Transverse colon (tissue), 4 donors: ENCODE measurements at regions of chr12 and their contacts with region 1.

Region 1: GRCh38 chr12:115916910-115917668 is 360.4 kb downstream of the MED13L start:
- DNase-seq: peak; percentile 82
- H3K4me3 ChIP-seq: peak overlapping the region in 3 of 4 donors; percentile 13 to 36 (median 20)
- H3K27ac ChIP-seq: no peak overlapping the region
- H3K4me1 ChIP-seq: peaks cover 3 to 5% (median 4%) of the 10 kb centered on the region in 4 donors
- H3K27me3 ChIP-seq: peaks cover 37% of the 10 kb centered on the region
- CTCF ChIP-seq: peak; percentile 94 to 98 (median 97)
- EP300 ChIP-seq: no peak
- POLR2A ChIP-seq: no peak

Region 2: DNA sequence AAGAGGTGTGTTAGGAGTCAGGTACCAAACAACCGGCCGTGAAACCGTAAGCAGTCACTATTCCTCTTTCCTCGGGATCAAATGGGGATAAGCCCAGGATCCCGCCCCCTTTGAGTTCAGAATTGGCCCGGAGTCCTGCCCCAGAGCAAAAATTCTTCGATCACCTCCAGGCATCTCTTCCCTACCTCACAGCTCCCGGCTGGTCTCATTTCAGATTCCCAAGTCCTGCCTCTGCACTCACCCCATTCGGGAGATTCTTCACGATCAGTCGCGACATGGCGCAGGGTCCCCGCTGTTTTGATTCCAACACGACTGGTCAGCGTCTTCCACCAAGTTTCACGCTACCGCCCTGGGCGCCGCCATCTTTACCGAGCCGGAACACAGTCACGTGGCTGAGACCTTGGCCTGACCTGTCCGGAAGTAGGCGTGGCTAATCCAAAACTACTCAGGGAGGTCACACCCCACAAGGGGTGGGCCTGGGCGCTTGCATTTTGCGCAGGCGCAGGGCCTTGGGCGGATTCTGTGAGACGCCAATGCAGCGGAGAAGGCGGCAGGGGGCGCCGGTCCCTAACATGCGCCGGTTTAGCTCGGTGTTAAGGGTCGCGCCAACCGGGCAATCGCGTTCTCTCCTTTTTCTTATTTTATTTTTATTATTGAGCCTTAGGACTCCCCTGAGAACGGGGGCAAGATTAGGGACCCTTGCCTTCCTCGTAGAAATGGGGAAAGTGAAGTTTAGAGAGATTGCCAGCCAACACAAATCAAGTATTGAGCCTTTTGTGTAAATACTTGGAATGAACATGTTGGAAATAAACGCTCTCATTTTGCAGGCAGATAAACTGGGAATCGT is 1950.9 kb before region 1 on chr12 and contains the start of gene RBM19:
- in situ Hi-C with region 1: loop called in 1 of 4 experiments (anchors 25 kb)
- intact Hi-C with region 1: no loop called
- DNase-seq: peak; percentile 98
- H3K4me3 ChIP-seq: peak within 1 kb of the TSS; percentile 45 to 83 (median 60)
- H3K27ac ChIP-seq: peak within 1 kb of the TSS; percentile 63 to 72 (median 64)
- H3K4me1 ChIP-seq: peaks cover 5 to 19% (median 11%) of the 10 kb centered on the region in 4 donors
- H3K27me3 ChIP-seq: no peaks in the 10 kb centered on the region
- CTCF ChIP-seq: peak; percentile 86 to 93 (median 90)
- EP300 ChIP-seq: no peak
- POLR2A ChIP-seq: peak; percentile 56
- total RNA-seq, gene RBM19: 24.3 to 96.1 (median 28.7) TPM

Region 3: DNA sequence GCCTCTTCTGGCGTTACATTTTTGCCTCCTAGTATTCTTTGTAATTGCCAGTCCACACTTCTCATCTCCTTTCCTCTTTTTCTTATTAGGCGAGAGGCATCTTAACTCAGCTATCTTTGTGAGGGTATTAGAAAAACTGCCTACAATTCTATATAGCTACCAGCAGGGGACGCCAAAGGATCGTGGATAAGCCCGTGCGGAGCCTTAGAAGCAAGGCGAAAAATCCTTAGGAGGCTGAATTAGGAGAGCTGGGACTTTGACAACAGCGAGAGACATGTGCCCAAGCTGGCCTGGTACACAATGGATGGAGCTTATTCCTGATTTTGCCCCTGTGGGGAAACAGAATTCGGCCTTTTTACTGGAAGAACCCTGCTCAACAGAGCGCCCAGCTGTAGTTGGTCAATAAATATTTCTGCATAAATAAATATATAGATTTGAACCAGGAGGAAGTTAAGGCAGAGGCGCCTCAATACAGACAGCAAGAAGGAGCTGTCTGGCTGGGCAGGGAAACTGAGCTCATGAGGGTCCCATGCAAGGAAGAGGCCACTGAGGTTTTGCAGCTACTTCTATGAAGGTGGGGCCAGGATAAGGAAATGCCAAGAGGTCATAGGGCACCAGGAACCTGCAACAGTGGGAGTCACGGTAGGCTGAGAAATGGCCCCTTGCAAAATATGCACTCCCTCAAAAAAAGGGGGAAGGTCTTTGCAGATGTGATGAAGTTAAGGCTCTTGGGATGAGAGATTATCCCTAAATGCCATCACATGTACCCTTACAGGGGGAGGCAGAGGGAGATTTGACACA is 1936.4 kb before region 1 on chr12:
- in situ Hi-C with region 1: loop called in 2 of 4 experiments (anchors 25 kb)
- intact Hi-C with region 1: no loop called
- DNase-seq: peak; percentile 24
- H3K4me3 ChIP-seq: no peak overlapping the region
- H3K27ac ChIP-seq: no peak overlapping the region
- H3K4me1 ChIP-seq: no peaks in the 10 kb centered on the region
- H3K27me3 ChIP-seq: peaks cover 24% of the 10 kb centered on the region
- CTCF ChIP-seq: peak; percentile 91 to 96 (median 93)
- EP300 ChIP-seq: no peak
- POLR2A ChIP-seq: no peak

Region 4: DNA sequence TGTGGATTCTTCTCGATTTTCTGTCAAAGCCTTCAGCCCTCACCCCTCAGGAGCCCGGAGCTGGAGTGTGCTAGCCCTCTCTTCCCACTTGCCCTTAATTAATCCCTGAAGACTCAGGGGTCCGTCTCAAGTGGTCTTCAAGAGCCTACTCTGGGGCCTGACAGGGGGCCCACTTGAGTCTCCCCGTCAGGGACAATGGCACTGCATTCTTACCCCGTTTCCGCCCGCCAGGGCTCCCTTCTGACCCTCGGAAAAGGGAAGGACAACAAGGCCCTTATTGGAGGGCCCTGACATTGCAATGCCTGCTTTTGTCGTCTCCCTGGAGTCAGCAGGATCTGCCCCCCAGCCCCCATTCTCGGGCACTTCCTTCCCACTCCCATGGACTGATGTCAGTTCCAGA is 1267.5 kb before region 1 on chr12:
- in situ Hi-C with region 1: loop called in 2 of 4 experiments (anchors 10 kb)
- intact Hi-C with region 1: no loop called
- DNase-seq: no peak
- H3K4me3 ChIP-seq: no peak overlapping the region
- H3K27ac ChIP-seq: no peak overlapping the region
- H3K4me1 ChIP-seq: no peaks in the 10 kb centered on the region
- H3K27me3 ChIP-seq: peaks cover 4% of the 10 kb centered on the region
- CTCF ChIP-seq: no peak
- EP300 ChIP-seq: no peak
- POLR2A ChIP-seq: no peak

Region 5: DNA sequence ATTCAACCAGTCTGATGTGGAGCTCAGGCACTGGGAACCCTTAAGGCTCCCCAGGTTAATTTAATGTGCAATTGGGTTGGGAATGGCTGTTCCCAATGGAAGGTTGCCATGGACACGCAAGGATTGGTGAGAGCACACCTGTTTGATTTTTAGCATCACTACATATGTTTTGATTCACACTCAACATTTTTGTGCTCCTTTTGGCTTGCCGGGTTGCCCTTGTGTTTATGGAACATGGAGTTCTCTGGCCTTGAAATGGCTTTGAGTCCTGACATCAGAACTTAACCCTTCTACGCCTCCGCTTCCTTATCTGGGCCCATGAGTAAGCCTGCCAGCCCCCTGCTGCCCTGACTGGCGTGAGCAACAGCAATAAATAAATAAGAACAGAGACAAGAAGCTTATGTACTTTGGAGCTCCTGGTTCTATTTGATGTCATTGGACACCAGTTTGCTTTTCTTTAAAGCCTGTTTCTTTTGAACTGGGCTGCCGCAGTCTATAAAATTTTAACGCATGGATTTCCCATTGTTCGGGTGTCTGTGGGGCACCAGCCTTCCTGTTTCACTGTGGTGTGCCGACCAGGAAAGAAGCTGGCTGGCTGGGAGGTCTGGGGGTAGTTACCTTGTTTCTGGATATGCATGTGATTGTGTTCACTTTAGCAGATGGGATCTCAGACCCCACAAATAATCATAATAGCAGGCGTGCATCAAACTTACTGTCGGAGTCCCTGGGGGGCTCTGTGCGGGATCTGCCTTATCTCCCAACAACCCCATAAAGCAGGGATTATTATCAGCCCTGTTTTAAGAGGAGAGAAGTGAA is 1260.9 kb before region 1 on chr12:
- in situ Hi-C with region 1: loop called in 3 of 4 experiments (anchors 5 to 10 kb)
- intact Hi-C with region 1: no loop called
- DNase-seq: no peak
- H3K4me3 ChIP-seq: no peak overlapping the region
- H3K27ac ChIP-seq: no peak overlapping the region
- H3K4me1 ChIP-seq: no peaks in the 10 kb centered on the region
- H3K27me3 ChIP-seq: peaks cover 20% of the 10 kb centered on the region
- CTCF ChIP-seq: no peak
- EP300 ChIP-seq: no peak
- POLR2A ChIP-seq: no peak

Region 6: DNA sequence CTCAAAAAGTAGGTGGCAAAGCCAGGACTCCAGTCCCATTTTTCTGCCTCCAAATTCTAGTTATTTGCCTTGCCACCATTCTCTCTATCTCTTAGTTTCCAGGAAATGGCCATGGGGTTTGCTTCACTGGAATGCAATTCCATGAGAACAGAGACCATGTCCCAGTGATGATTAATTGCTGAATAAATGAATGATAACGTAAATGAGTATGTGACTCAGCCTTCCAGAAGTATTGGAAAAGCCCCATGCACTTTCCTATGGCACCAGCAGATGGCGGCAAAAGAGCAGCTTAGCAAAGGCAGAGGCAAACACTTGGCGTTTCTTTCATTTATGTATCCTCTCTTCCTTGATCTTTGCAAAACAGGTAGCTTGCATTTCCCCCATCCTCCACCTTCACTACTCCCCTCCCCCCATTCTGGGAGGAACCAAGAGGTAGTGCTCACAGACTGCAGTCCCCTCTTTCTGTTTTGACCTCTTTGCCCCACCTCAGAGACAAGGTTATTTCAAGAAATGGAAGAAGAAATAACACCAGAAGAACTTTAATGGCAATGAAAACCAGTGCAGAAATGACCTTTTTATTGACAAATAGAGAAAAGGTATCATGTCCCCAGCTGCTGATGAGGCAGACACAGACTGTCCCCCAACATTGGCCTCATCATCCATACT is 1254.4 kb before region 1 on chr12:
- in situ Hi-C with region 1: loop called in 3 of 4 experiments (anchors 5 to 10 kb)
- intact Hi-C with region 1: loop called (anchors 5 kb)
- DNase-seq: peak; percentile 84
- H3K4me3 ChIP-seq: no peak overlapping the region
- H3K27ac ChIP-seq: no peak overlapping the region
- H3K4me1 ChIP-seq: peaks cover under 1 to 20% (median 4%) of the 10 kb centered on the region in 4 donors
- H3K27me3 ChIP-seq: peaks cover 61% of the 10 kb centered on the region
- CTCF ChIP-seq: peak; percentile 90 to 96 (median 94)
- EP300 ChIP-seq: no peak
- POLR2A ChIP-seq: no peak

Region 7: GRCh38 chr12:114668151-114668885 is 1248.8 kb before region 1 on chr12:
- in situ Hi-C with region 1: loop called in 2 of 4 experiments (anchors 5 to 10 kb)
- intact Hi-C with region 1: loop called (anchors 5 kb)
- DNase-seq: peak; percentile 90
- H3K4me3 ChIP-seq: peak overlapping the region; percentile 24 to 53 (median 34)
- H3K27ac ChIP-seq: peak overlapping the region; percentile 10 to 65 (median 62)
- H3K4me1 ChIP-seq: peaks cover 4 to 31% (median 10%) of the 10 kb centered on the region in 4 donors
- H3K27me3 ChIP-seq: peaks cover 88% of the 10 kb centered on the region
- CTCF ChIP-seq: peak; percentile 31 to 85 (median 57)
- EP300 ChIP-seq: no peak
- POLR2A ChIP-seq: no peak

Region 8: GRCh38 chr12:115885038-115885690 is 31.9 kb before region 1 on chr12:
- in situ Hi-C with region 1: no loop called
- intact Hi-C with region 1: no loop called
- DNase-seq: no peak
- H3K4me3 ChIP-seq: no peak overlapping the region
- H3K27ac ChIP-seq: no peak overlapping the region
- H3K4me1 ChIP-seq: no peaks in the 10 kb centered on the region
- H3K27me3 ChIP-seq: peaks cover 2% of the 10 kb centered on the region
- CTCF ChIP-seq: no peak
- EP300 ChIP-seq: no peak
- POLR2A ChIP-seq: no peak